Dorsolateral prefrontal cortex (tissue), 120 donors: ENCODE measurements at regions of chr2 and their contacts with region 1.

Region 1: DNA sequence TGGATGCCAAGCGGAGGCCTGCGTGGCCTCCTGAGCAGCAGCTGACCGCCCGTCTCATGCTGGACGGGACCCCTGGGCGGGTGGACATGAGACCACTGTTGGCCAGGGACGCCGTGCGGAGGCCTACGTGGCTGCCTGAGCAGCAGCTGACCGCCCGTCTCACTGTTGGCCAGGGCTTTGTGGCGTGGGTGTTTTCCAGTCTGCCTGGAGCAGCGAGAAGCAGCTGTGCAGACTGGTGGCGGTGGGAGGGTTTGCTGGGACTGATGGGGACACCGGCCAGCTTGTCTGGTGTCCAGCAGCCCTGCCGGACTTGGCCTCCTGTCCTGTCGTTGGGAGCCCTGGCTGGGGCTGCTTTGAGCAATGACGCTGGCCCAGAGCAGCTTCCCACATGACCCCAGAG is 5.8 kb upstream of the D2HGDH start:
- DNase-seq: peak; percentile 29 to 81 (median 76)
- H3K4me3 ChIP-seq: peak overlapping the region in 15 of 59 donors; percentile 2 to 32 (median 18)
- H3K27ac ChIP-seq: peak overlapping the region in 56 of 59 donors; percentile 37 to 86 (median 73)
- H3K27me3 ChIP-seq: no peaks in the 10 kb centered on the region
- CTCF ChIP-seq: peak in 11 of 56 donors; percentile 5 to 41 (median 26)

Region 2: GRCh38 chr2:241673797-241674725 is 54.6 kb before region 1 on chr2:
- intact Hi-C with region 1: no loop called
- DNase-seq: peak in 5 of 10 donors; percentile 31 to 71 (median 41)
- H3K4me3 ChIP-seq: no peak overlapping the region
- H3K27ac ChIP-seq: peak overlapping the region in 50 of 59 donors; percentile 9 to 85 (median 56)
- H3K27me3 ChIP-seq: no peaks in the 10 kb centered on the region
- CTCF ChIP-seq: no peak

Region 3: GRCh38 chr2:241702132-241703031 is 26.2 kb before region 1 on chr2:
- intact Hi-C with region 1: loop called (anchors 2 kb)
- DNase-seq: peak; percentile 77 to 93 (median 84)
- H3K4me3 ChIP-seq: peak overlapping the region; percentile 63 to 100 (median 88)
- H3K27ac ChIP-seq: peak overlapping the region in 56 of 59 donors; percentile 32 to 97 (median 91)
- H3K27me3 ChIP-seq: no peaks in the 10 kb centered on the region
- CTCF ChIP-seq: peak in 24 of 56 donors; percentile 3 to 46 (median 23)